ENCODE measurements at regions of chr17 and their contacts with region 1.

Region 1: DNA sequence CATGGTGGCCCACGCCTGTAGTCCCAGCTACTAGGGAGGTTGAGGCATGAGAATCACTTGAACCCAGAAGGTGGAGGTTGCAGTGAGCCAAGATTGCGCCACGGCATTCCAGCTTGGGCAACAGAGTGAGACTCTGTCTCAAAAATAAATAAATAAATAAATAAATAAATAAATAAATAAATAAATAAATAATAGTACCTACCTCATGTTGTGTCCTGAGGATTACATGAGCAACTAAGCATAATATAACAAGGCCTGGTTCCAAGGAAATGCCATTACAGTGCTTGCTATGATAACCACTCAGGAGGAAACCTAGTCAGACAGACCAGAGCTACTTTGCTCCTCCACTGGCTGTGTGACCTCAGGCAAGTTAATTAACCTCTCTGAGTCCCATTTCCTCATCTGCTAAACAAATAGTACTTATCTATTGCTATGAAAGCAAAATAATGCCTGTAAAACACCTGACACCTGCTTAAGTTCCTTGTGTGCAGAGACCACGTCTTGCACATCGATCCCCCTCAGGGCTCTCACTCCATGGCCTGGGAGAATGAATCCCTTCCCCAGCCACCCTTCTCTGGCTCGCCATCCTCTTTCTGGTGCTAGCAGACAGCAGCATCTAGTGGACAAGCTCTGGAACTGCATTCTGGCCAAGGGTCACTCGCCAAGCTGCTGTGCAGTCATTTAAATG is 7.5 kb downstream of the EPOP start:
- DNase-seq: peak; percentile 43 to 88 (median 74)

Region 2: GRCh38 chr17:37650419-37651003 is 1016.7 kb before region 1 on chr17:
- intact Hi-C with region 1: no loop called
- DNase-seq: peak in 18 of 42 donors; percentile 8 to 61 (median 26)

Region 3: DNA sequence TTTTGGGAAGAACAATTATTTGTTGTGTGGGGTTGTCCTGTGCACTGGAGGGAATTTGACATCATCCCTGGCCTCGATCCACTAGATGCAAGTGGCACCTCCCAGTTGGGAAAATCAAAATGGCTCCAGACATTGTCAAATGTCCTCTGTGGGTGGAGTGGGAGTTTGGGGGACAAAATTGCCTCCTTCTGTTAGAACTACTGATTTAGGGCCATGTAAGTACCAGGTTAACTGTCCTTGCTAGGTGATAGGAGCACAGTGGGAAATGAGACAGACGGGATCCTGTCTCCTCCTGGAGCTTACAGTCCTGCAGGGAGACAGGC is 182.1 kb before region 1 on chr17:
- intact Hi-C with region 1: loop called (anchors 5 kb)
- DNase-seq: no peak

Region 4: DNA sequence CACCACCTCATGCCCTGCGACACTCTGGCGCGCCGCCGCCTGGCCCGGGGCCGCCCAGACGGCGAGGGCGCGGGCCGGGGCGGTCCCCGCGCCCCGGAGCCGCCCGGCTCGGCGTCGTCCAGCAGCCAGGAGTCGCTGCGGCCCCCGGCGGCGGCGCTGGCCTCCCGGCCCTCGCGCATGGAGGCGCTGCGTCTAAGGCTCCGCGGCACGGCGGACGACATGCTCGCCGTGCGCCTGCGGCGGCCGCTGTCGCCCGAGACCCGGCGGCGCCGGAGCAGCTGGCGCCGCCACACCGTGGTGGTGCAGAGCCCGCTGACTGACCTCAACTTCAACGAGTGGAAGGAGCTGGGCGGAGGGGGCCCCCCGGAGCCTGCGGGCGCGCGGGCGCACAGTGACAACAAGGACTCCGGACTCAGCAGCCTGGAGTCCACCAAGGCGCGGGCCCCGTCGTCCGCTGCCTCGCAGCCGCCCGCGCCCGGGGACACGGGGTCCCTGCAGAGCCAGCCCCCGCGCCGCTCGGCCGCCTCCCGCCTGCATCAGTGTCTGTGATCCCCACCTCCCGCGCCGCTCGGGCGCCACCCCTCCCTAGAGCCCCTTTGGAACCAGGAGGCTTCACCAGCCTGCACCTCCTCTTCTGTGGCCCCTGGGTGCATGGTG is 156.7 kb before region 1 on chr17:
- intact Hi-C with region 1: loop called (anchors 10 kb)
- DNase-seq: peak in 3 of 42 donors; percentile 32 to 55 (median 38)

Region 5: DNA sequence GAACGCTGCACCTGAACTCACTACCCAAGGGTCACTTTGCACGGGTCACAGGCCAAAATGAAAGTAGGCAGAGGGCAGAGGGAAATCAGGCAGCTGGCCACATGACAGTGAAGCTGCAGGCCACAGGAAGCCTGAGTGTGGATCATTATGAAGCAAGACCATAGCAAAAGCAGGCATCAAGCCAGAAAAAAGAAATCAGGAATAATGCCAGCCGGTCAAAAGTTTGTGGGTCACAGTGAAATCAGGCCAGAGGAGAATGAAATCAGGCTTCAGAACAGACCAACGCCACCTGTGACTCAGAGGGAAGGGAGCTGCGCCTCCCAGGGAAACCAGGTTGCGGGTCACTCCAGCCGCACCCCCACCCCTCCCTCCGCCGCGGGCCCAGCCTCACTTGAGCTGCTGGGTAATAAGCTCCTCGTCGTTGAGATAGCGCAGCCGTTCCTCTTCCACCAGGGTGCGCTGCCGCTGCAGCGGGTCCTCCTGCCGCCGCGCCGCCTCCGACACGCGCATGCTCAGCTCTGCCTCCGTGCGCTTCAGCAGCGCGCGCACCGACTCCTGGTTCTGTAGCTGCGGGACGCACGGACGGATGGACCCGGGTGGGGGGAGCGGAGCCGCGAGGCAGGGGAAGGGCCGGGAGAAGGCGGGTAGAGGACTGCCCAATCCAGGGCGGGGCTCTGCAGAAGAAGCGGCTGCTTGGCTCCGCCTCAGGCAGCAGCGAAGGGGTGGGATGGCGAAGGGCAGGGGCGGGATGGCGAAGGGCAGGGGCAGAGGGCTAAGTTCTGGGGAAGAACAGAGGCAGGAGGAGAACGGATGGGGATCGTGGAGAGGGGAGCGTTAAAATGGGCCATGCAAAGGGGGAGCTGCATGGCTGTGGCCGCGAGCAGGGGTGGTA is 109.2 kb before region 1 on chr17:
- intact Hi-C with region 1: loop called (anchors 2 kb)
- DNase-seq: peak; percentile 83 to 97 (median 92)

Region 6: DNA sequence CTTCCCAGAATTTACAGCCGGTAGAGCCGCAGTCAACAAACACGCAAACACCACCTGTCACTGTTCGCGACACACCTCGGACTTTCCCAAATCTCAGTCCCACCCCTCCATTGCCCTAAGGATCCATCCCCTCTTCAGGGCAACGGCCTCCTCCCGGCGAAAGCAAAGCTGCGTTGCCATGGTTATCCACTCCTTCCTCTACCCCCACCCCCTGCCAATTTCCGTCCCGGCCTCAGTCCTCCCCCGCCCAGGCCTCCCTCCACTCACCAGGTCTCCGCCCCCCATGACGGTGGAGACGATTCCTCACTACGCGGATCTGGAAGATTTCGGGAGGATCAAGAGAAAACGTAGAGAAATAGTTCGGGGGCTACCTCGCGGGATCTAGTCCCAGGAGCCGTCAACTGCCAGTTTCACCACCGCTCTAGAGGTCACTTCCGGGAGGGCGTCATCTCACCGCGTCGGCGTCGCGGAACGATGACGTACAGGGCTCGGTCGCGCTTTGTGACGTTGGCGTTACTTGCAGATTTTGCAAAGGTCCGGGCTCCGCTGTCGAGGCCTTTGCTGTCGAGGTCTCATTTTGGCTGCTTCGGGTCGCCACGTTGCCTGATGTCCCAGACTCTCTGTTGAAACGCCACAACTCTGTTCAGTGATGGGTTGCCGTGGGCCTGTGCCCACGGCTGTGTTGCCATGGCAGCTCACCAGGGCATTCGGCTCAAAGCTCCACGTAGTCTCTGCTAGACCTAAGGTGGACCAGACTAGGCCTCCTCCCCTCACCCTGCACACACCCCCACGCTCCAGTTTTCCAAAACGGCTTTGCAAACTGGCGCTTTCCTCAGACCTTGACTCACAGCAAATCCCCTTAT is 157.9 kb after region 1 on chr17 and contains the start of gene CWC25:
- intact Hi-C with region 1: no loop called
- DNase-seq: peak; percentile 80 to 98 (median 94)

Measured in head of caudate nucleus (tissue), 42 donors.